Activated B cell treated with CpG ODN at 0.5 μM for 24 hours (primary cell): ENCODE measurements at regions of chr2 and their contacts with region 1.

Region 1: DNA sequence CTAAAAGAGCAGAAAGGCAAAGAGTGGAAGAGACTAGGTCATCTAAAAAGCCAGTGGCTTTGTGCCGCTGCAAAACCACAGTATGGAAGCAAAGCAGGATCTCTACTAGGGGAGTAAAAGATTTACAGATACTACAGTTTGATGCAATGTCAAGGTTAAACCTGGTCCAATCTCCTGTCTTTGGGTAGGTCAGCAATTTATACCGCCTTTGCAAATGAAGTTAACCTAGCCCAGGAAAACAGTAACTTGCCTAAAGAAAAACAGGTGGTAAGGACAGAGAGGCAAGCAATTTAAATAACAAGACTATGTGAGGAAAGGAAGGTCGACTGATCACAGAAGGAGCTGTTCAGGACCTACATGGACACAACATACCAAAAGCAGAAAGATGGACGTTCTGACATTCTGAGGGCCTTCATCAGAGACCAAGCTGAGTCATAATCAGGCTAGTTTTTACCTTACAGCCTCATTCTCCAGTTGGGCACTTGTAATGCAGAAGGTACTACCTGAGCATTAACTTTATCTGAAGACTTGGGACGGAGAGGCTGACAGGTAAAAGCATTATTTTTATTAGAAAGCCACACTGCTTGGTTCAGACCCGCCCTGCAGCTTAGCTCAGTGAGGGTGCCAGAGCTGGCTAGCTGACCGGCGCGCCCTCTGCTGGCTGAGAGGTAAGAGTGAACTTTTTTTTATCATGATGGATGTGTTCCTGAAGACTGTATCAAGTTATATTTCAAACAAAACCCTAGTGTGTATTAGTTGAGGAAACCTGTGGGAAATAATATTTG is 15.9 kb downstream of the CDKL4 start:
- DNase-seq: peak; percentile 69
- ATAC-seq: peak; percentile 87
- H3K4me3 Mint-ChIP-seq: peak overlapping the region; percentile 73
- H3K27ac Mint-ChIP-seq: no peak overlapping the region
- H3K4me1 Mint-ChIP-seq: peaks cover 15% of the 10 kb centered on the region
- H3K27me3 Mint-ChIP-seq: no peaks in the 10 kb centered on the region
- CTCF ChIP-seq: peak; percentile 86

Region 2: DNA sequence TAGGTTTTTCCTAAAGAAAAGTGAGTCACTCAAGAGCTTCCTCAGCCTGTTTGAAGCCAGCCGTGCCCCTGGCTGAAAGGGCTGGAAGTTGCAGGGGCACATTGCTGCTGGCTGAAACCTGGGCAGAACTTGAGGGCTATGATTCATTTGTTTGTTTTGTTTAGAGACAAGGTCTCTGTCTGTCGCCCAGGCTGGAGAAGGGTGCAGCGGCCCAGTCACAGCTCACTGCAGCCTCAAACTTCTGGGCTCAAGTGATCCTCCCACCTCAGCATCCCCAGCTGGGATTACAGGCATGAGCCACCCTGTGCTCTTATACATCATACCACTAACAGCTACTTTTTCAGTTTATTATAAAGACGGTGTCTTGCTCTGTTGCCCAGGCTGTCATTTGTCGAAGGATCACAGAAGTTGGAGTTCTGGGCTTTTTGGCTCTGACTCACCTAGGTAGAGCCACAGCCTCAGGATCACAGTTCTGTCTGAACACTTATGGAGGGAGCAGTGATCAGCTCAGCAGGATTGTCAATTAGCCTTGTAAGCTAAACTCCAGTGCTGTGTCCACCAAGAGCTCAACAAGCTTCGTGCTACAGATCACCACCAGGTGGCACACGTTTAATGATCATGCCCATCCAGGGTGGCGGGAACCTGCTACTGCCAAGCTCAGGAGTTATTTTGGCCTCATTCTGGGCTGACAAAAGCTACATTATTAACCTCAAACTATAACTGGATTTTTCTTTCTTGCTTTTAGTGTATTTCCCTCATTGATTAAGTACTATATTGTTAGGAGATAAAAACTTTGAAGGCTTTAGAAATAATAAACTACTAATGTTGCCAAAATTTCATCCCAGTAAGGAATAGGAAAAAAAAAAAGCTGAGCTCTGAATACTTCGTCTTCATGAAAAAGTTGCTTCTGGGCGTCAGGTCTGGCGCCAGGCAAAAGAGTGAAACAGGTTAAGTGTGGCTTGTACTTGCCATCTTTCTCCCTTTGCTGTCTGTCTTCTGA is 280.3 kb before region 1 on chr2:
- CTCF ChIA-PET with region 1: interaction called, 130 read pairs
- POLR2A ChIA-PET with region 1: interaction called, 6 read pairs
- intact Hi-C with region 1: loop called (anchors 1 kb)
- DNase-seq: no peak
- ATAC-seq: peak; percentile 66
- H3K4me3 Mint-ChIP-seq: no peak overlapping the region
- H3K27ac Mint-ChIP-seq: no peak overlapping the region
- H3K4me1 Mint-ChIP-seq: no peaks in the 10 kb centered on the region
- H3K27me3 Mint-ChIP-seq: no peaks in the 10 kb centered on the region
- CTCF ChIP-seq: no peak

Region 3: DNA sequence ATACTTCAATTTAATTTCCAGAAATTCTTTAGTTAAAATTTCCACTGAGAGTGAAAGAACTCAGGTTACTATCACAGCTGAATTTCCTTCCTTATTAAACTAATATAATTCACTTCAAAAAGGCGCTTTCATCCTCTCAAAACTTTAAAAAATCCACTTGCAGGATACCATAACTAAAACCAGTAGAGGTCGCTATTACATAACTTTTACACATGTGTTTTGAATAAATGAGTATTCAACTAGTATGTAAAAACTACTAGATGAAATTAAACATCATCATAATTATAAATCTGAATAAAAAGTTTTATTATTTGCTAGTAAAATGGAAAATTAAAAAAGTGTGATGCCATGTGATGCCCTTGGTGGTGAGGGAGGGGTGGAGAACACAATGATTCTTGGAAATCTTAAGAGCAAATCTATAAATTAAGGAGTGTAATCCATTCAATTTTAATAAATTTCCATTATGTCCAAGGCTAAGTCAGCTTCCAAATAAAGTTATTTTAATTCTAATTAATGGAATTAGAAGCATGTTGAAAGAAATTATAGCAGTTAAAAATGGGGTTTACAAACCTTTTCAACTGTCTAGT is 168.4 kb before region 1 on chr2:
- CTCF ChIA-PET with region 1: interaction called, 230 read pairs
- POLR2A ChIA-PET with region 1: no interaction called
- intact Hi-C with region 1: loop called (anchors 1 kb)
- DNase-seq: no peak
- ATAC-seq: no peak
- H3K4me3 Mint-ChIP-seq: no peak overlapping the region
- H3K27ac Mint-ChIP-seq: no peak overlapping the region
- H3K4me1 Mint-ChIP-seq: no peaks in the 10 kb centered on the region
- H3K27me3 Mint-ChIP-seq: no peaks in the 10 kb centered on the region
- CTCF ChIP-seq: peak; percentile 67

Region 4: GRCh38 chr2:39065616-39066015 is 162.2 kb before region 1 on chr2:
- CTCF ChIA-PET with region 1: interaction called, 230 read pairs
- POLR2A ChIA-PET with region 1: no interaction called
- intact Hi-C with region 1: no loop called
- DNase-seq: no peak
- ATAC-seq: no peak
- H3K4me3 Mint-ChIP-seq: no peak overlapping the region
- H3K27ac Mint-ChIP-seq: peak overlapping the region; percentile 25
- H3K4me1 Mint-ChIP-seq: peaks cover 14% of the 10 kb centered on the region
- H3K27me3 Mint-ChIP-seq: no peaks in the 10 kb centered on the region
- CTCF ChIP-seq: no peak